Colonic mucosa (tissue), 4 donors: ENCODE measurements at regions of chr2 and their contacts with region 1.

Region 1: DNA sequence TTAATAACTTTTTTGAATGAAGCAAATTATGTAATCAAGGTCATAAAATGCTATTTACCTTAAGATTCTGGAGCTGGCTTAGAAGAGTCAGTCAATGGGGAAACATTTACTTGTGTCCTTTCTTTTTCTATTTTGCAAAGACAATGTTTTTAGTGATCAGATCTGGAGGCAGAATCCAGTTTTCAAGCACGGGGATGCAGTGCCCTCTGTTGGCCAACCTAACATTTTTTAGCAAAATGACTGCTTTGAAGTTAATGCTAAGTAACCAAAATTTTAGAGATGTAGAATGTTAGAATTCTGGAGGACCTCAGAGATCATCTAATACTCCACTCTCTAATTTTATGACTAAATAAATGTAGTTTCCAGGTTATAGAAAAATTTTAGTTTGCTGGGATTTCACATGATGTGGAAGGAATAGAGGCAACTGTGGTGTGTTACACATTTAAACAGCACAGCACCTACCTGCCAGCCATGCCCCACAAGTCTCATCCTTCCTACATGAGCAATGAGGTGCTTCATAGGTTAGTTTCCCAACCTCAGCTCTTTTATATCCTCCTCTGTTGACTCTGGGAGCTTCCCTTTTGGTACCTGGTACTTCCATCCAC is 23.6 kb upstream of the SLC9A4 start:
- DNase-seq: peak; percentile 34
- H3K4me3 ChIP-seq: no peak overlapping the region
- H3K27ac ChIP-seq: no peak overlapping the region
- H3K4me1 ChIP-seq: no peaks in the 10 kb centered on the region
- H3K27me3 ChIP-seq: no peaks in the 10 kb centered on the region
- CTCF ChIP-seq: peak; percentile 45

Region 2: GRCh38 chr2:102355526-102356380 is 93.7 kb before region 1 on chr2 and contains the start of gene IL18R1:
- intact Hi-C with region 1: loop called (anchors 5 kb)
- DNase-seq: peak; percentile 76
- H3K4me3 ChIP-seq: peak within 1 kb of the TSS; percentile 73
- H3K27ac ChIP-seq: peak within 1 kb of the TSS; percentile 59
- H3K4me1 ChIP-seq: peaks cover 3% of the 10 kb centered on the region
- H3K27me3 ChIP-seq: no peaks in the 10 kb centered on the region
- CTCF ChIP-seq: peak; percentile 83
- total RNA-seq, gene IL18R1: 1.1 to 3.0 TPM